GM12878 (cell line): ENCODE measurements at regions of chr5 and their contacts with region 1.

Region 1: GRCh38 chr5:126965061-126965475 is 65.3 kb downstream of the MARCHF3 start:
- DNase-seq: peak; percentile 55
- ATAC-seq: peak; percentile 75
- H3K4me3 ChIP-seq: no peak overlapping the region
- H3K27ac ChIP-seq: no peak overlapping the region
- H3K4me1 ChIP-seq: peaks cover 14% of the 10 kb centered on the region
- H3K27me3 ChIP-seq: no peaks in the 10 kb centered on the region
- CTCF ChIP-seq: no peak
- EP300 ChIP-seq: no peak
- POLR2A ChIP-seq: no peak
- RAD21 ChIP-seq: no peak

Region 2: GRCh38 chr5:126811515-126812198 is 153.4 kb before region 1 on chr5:
- CTCF ChIA-PET with region 1: no interaction called
- POLR2A ChIA-PET with region 1: no interaction called
- RAD21 ChIA-PET with region 1: no interaction called
- SMC1A ChIA-PET with region 1: no interaction called
- in situ Hi-C with region 1: no loop called
- intact Hi-C with region 1: no loop called
- DNase-seq: no peak
- ATAC-seq: peak; percentile 28; the same call in 2 of the 3 replicates
- H3K4me3 ChIP-seq: no peak overlapping the region
- H3K27ac ChIP-seq: no peak overlapping the region
- H3K4me1 ChIP-seq: no peaks in the 10 kb centered on the region
- H3K27me3 ChIP-seq: no peaks in the 10 kb centered on the region
- CTCF ChIP-seq: no peak
- EP300 ChIP-seq: no peak
- POLR2A ChIP-seq: no peak
- RAD21 ChIP-seq: no peak

Region 3: DNA sequence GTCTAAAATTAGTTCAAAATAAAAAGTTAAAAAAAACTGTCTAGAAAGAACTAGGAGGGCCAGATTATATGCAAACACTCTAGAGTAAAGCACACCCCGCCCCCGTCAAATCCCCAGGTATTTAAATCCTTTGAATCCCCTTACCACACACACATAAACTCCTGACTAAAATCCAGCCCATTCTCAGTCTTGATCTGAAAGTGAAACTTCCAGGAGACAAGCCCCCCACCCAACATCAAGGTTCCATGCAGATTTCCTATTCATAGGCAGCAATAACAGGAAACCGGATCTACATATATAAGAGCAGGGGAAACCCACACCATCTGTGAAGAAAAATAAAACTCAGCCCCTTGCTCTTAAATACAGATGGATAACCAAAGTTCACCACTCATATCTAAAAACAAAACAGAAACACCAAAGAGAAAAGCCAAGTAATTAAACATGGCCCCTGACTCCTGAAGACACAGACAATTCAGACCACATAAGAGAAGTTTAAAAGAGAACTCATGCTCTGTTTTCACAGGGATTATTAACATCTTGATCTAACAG is 23.0 kb after region 1 on chr5:
- CTCF ChIA-PET with region 1: interaction called, 4 read pairs
- POLR2A ChIA-PET with region 1: interaction called, 3 read pairs
- RAD21 ChIA-PET with region 1: interaction called, 4 read pairs
- SMC1A ChIA-PET with region 1: interaction called, 12 read pairs
- in situ Hi-C with region 1: no loop called
- intact Hi-C with region 1: no loop called
- DNase-seq: peak; percentile 79
- ATAC-seq: peak; percentile 93
- H3K4me3 ChIP-seq: peak overlapping the region; percentile 8; the same call in 1 of the 2 replicates
- H3K27ac ChIP-seq: peak overlapping the region; percentile 63
- H3K4me1 ChIP-seq: peaks cover 16% of the 10 kb centered on the region
- H3K27me3 ChIP-seq: no peaks in the 10 kb centered on the region
- CTCF ChIP-seq: no peak
- EP300 ChIP-seq: peak; percentile 57 to 78; a peak in 2 of 4 replicates
- POLR2A ChIP-seq: no peak
- RAD21 ChIP-seq: 0 out of 2 replicates have a peak, but pooled peaks have one; percentile 0

Region 4: DNA sequence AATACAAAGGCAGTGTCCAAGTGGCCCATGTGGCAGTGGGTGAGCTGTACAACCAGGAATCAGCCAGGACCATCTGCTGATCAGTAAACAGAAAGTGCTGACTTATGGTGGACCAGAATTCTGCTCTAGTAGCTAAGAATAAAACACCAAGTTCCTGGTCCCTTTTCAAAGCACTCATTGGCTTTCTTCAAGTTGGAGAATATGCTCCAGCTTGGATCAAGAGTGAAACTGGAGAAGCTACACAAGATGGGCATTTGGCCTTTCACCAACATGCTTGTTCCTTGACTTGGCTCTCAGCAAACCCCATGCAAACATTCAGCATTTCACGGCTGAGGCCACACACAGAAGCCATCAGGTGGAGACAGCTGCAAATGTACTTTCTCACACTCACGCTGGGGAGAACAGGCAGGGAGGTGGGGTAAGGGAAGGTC is 33.1 kb after region 1 on chr5:
- CTCF ChIA-PET with region 1: interaction called, 6 read pairs
- POLR2A ChIA-PET with region 1: no interaction called
- RAD21 ChIA-PET with region 1: interaction called, 5 read pairs
- SMC1A ChIA-PET with region 1: interaction called, 21 read pairs
- in situ Hi-C with region 1: no loop called
- intact Hi-C with region 1: no loop called
- DNase-seq: peak; percentile 35
- ATAC-seq: peak; percentile 88
- H3K4me3 ChIP-seq: no peak overlapping the region
- H3K27ac ChIP-seq: peak overlapping the region; percentile 46
- H3K4me1 ChIP-seq: peaks cover 5% of the 10 kb centered on the region
- H3K27me3 ChIP-seq: no peaks in the 10 kb centered on the region
- CTCF ChIP-seq: peak in 1 of 3 experiments; percentile 27; a peak in 2 of 6 replicates
- EP300 ChIP-seq: no peak
- POLR2A ChIP-seq: no peak
- RAD21 ChIP-seq: peak; percentile 56

Region 5: GRCh38 chr5:127019928-127020327 is 54.9 kb after region 1 on chr5:
- CTCF ChIA-PET with region 1: interaction called, 4 read pairs
- POLR2A ChIA-PET with region 1: interaction called, 4 read pairs
- RAD21 ChIA-PET with region 1: interaction called, 102 read pairs
- SMC1A ChIA-PET with region 1: interaction called, 102 read pairs
- in situ Hi-C with region 1: no loop called
- intact Hi-C with region 1: no loop called
- DNase-seq: no peak
- ATAC-seq: peak; percentile 77
- H3K4me3 ChIP-seq: no peak overlapping the region
- H3K27ac ChIP-seq: no peak overlapping the region
- H3K4me1 ChIP-seq: no peaks in the 10 kb centered on the region
- H3K27me3 ChIP-seq: no peaks in the 10 kb centered on the region
- CTCF ChIP-seq: no peak
- EP300 ChIP-seq: no peak
- POLR2A ChIP-seq: no peak
- RAD21 ChIP-seq: no peak

Region 6: GRCh38 chr5:127025467-127025866 is 60.4 kb after region 1 on chr5:
- CTCF ChIA-PET with region 1: interaction called, 5 read pairs
- POLR2A ChIA-PET with region 1: interaction called, 5 read pairs
- RAD21 ChIA-PET with region 1: interaction called, 19 read pairs
- SMC1A ChIA-PET with region 1: interaction called, 26 read pairs
- in situ Hi-C with region 1: no loop called
- intact Hi-C with region 1: no loop called
- DNase-seq: no peak
- ATAC-seq: no peak
- H3K4me3 ChIP-seq: no peak overlapping the region
- H3K27ac ChIP-seq: no peak overlapping the region
- H3K4me1 ChIP-seq: no peaks in the 10 kb centered on the region
- H3K27me3 ChIP-seq: no peaks in the 10 kb centered on the region
- CTCF ChIP-seq: no peak
- EP300 ChIP-seq: no peak
- POLR2A ChIP-seq: no peak
- RAD21 ChIP-seq: no peak